BJ (cell line): ENCODE measurements at regions of chr18 and their contacts with region 1.

Region 1: DNA sequence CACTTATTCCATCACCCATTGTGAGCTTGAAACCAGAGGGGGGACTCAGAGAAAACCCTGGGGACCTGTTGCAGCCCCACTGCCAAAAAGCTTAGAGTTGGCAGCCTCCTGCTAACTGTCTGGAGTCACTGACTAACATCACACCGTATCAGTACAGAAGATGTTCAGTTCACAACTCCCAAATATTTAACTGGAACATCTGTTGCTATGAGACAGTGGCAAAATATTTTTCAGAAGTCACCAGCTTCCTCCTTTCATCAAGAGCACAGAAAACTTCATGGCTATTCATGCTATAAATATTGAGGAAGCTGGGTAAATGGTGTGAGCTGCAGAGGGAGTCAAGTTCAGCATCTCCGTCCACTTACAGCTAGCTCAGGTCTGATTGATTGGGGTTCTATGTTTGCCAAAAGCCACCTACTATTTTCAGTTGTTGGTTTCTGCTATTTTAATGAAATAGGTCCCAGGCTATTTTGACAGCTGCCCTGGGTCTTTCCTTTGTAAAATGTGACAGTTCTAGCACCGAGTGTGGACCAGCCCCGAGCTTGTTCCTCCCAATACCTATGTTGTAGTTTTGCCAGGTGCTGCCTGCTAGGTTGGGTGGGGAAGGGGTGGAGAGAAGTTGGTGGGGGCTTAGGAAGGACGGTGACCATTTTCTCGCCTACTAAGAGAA is 9.8 kb downstream of the TUBB6 start:
- DNase-seq: peak; percentile 64
- H3K4me3 ChIP-seq: no peak overlapping the region
- H3K27me3 ChIP-seq: no peaks in the 10 kb centered on the region
- CTCF ChIP-seq: no peak

Region 2: GRCh38 chr18:12278741-12279682 is 38.8 kb before region 1 on chr18:
- CTCF ChIA-PET with region 1: interaction called, 5 read pairs
- POLR2A ChIA-PET with region 1: interaction called, 12 read pairs
- DNase-seq: peak; percentile 83
- H3K4me3 ChIP-seq: peak overlapping the region; percentile 42
- H3K27me3 ChIP-seq: no peaks in the 10 kb centered on the region
- CTCF ChIP-seq: no peak